ENCODE measurements at regions of chr12 and their contacts with region 1.

Region 1: DNA sequence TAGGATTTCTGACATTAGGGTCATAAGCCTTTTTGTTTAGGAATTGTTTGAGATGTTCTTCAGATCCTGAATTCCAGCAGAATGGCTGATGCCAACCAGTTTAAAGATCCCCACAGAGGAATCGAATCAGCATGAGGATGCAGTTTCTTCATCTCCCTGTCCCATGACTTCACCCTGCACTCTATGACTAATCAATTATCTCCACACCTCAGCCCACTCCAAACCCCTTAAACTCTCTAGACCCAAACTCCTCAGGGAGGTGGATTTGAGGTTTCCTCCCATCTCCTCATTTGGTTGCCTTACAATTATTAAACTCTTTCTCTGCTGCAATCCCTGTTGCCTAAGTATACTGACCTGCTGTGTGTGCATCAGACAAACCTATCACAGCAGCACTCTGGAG is 86.5 kb upstream of the CRY1 start:
- DNase-seq: no peak
- H3K4me3 ChIP-seq: no peak overlapping the region
- H3K27ac ChIP-seq: no peak overlapping the region
- H3K4me1 ChIP-seq: no peaks in the 10 kb centered on the region
- H3K27me3 ChIP-seq: no peaks in the 10 kb centered on the region
- CTCF ChIP-seq: no peak
- POLR2A ChIP-seq: no peak

Region 2: DNA sequence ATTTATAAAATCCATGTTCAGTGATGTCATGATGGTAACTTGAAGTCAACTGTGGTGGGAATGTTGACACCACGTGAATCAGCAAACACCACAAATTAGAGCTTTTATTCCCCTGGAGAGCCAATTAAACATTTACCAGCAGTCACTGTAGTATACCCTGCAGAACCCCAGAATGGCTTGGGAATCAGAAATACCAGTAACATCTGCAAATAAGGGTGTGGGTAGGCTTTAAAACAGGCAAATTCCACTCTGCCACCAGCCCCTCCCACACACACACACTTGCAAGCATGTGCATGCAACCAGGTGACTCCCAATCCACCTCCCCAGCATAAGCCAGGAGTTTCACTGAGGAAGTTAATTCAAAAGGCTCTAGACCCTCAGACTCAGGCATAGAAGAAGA is 287.8 kb before region 1 on chr12:
- intact Hi-C with region 1: no loop called
- DNase-seq: no peak
- H3K4me3 ChIP-seq: no peak overlapping the region
- H3K27ac ChIP-seq: no peak overlapping the region
- H3K4me1 ChIP-seq: no peaks in the 10 kb centered on the region
- H3K27me3 ChIP-seq: no peaks in the 10 kb centered on the region
- CTCF ChIP-seq: no peak
- POLR2A ChIP-seq: no peak

Region 3: GRCh38 chr12:107196681-107197080 is 16.8 kb after region 1 on chr12:
- intact Hi-C with region 1: loop called (anchors 2 kb)
- DNase-seq: no peak
- H3K4me3 ChIP-seq: no peak overlapping the region
- H3K27ac ChIP-seq: no peak overlapping the region
- H3K4me1 ChIP-seq: no peaks in the 10 kb centered on the region
- H3K27me3 ChIP-seq: no peaks in the 10 kb centered on the region
- CTCF ChIP-seq: no peak
- POLR2A ChIP-seq: no peak

Region 4: DNA sequence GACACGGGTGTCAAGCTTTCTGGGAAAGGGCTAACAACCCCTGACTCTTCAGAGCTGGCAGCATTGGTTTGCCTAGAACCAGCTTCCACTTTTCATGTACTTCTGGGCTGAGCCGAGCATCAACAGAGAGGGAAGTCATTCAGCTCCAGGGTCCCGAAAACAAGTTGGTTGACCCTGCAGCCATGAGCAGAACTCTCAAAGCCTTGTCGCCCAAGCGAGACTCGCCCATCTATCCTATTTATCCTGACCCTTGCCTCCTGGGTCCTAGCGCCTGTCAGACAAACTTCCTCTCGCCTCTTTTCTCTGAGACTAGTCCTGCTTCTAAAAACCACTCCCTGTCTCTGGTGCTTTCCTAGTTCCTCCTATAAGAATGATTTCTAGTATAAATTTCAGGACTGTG is 642.5 kb after region 1 on chr12:
- intact Hi-C with region 1: no loop called
- DNase-seq: no peak
- H3K4me3 ChIP-seq: no peak overlapping the region
- H3K27ac ChIP-seq: no peak overlapping the region
- H3K4me1 ChIP-seq: no peaks in the 10 kb centered on the region
- H3K27me3 ChIP-seq: no peaks in the 10 kb centered on the region
- CTCF ChIP-seq: no peak
- POLR2A ChIP-seq: no peak

Measured in vagina (tissue), 2 donors.